MCF 10A (cell line): ENCODE measurements at regions of chr2 and their contacts with region 1.

Region 1: DNA sequence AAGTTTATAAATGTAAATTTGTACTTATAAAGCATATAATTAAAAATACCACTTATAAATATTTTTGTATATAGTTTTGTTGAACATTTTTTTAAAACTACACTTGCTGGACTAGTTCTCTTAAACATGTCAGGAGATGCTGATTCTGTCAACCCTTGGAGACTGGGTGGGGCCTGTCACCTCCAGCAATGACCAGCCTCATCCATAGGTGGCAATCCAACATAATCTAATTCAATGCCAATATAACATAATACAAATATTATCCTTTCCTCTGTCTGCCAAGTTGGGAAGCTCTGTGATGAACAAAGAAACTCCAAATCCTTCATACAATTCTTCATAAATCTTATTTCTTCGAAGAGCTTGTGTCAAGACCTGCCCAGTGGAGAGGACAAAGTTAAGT is 140.4 kb downstream of the RBMS1 start:
- DNase-seq: peak; percentile 54
- H3K4me3 Mint-ChIP-seq: no peak overlapping the region
- H3K27ac Mint-ChIP-seq: peak overlapping the region; percentile 38
- H3K4me1 Mint-ChIP-seq: peaks cover 63% of the 10 kb centered on the region
- H3K27me3 Mint-ChIP-seq: no peaks in the 10 kb centered on the region
- CTCF ChIP-seq: peak; percentile 40

Region 2: GRCh38 chr2:160324161-160324800 is 28.9 kb before region 1 on chr2:
- CTCF ChIA-PET with region 1: interaction called, 11 read pairs
- POLR2A ChIA-PET with region 1: no interaction called
- intact Hi-C with region 1: no loop called
- DNase-seq: peak; percentile 66
- H3K4me3 Mint-ChIP-seq: no peak overlapping the region
- H3K27ac Mint-ChIP-seq: peak overlapping the region; percentile 36
- H3K4me1 Mint-ChIP-seq: peaks cover 30% of the 10 kb centered on the region
- H3K27me3 Mint-ChIP-seq: no peaks in the 10 kb centered on the region
- CTCF ChIP-seq: peak; percentile 71

Region 3: GRCh38 chr2:160387558-160388262 is 34.5 kb after region 1 on chr2:
- CTCF ChIA-PET with region 1: interaction called, 3 read pairs
- POLR2A ChIA-PET with region 1: interaction called, 17 read pairs
- intact Hi-C with region 1: no loop called
- DNase-seq: peak; percentile 92
- H3K4me3 Mint-ChIP-seq: peak overlapping the region; percentile 43
- H3K27ac Mint-ChIP-seq: peak overlapping the region; percentile 80
- H3K4me1 Mint-ChIP-seq: peaks cover 47% of the 10 kb centered on the region
- H3K27me3 Mint-ChIP-seq: no peaks in the 10 kb centered on the region
- CTCF ChIP-seq: no peak

Region 4: DNA sequence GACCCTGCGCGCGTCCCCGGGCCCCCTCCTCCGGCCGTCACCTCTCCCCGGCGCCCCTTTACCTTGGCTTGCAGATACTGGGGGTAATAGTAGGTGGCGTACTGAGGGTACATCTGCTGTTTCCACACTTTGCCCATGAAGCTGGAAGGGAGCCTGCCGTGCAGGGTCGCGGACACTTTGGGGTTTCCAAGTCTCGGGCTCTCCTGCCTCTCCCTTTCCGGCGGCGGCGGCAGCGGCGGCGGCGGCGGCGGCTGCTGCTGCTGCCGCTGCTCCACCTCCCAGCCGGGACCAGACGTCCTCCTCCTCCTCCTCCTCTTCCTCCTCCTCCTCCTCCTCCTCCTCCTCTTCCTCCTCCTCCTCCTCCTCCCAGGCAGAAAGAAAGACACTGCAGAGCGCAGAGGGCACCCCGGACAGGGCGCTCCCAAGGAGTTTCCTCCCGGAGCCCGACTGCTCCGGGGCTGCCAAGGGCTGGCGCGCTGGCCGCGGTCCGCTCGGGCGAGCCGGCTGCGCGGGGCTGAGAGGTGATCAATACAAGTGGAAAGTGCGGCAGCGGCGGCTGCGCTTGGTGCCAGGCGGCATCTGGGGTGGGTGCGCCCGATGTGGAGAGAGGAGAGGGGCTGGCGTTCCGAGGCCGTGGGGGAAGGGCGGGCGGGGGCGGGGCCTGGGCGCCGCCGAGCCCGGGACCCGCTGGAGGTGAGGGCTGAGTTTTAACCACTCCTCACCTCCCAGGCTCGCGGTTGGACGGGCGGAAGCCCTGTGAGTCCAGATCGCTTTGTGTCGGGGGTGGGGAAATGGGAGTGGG is 140.3 kb after region 1 on chr2 and contains the start of gene RBMS1:
- CTCF ChIA-PET with region 1: no interaction called
- POLR2A ChIA-PET with region 1: no interaction called
- intact Hi-C with region 1: loop called (anchors 5 kb)
- DNase-seq: peak; percentile 57
- H3K4me3 Mint-ChIP-seq: peak within 1 kb of the TSS; percentile 82
- H3K27ac Mint-ChIP-seq: peak within 1 kb of the TSS; percentile 83
- H3K4me1 Mint-ChIP-seq: peaks cover 12% of the 10 kb centered on the region
- H3K27me3 Mint-ChIP-seq: peaks cover 12% of the 10 kb centered on the region
- CTCF ChIP-seq: no peak
- total RNA-seq, gene RBMS1: 65.4 and 66.8 TPM in 2 replicates

Region 5: GRCh38 chr2:161030260-161031063 is 677.3 kb after region 1 on chr2:
- CTCF ChIA-PET with region 1: no interaction called
- POLR2A ChIA-PET with region 1: interaction called, 3 read pairs
- intact Hi-C with region 1: loop called (anchors 1 kb)
- DNase-seq: peak; percentile 97
- H3K4me3 Mint-ChIP-seq: peak overlapping the region; percentile 0
- H3K27ac Mint-ChIP-seq: peak overlapping the region; percentile 84
- H3K4me1 Mint-ChIP-seq: peaks cover 24% of the 10 kb centered on the region
- H3K27me3 Mint-ChIP-seq: no peaks in the 10 kb centered on the region
- CTCF ChIP-seq: no peak